ENCODE measurements at regions of chr1 and their contacts with region 1.

Region 1: DNA sequence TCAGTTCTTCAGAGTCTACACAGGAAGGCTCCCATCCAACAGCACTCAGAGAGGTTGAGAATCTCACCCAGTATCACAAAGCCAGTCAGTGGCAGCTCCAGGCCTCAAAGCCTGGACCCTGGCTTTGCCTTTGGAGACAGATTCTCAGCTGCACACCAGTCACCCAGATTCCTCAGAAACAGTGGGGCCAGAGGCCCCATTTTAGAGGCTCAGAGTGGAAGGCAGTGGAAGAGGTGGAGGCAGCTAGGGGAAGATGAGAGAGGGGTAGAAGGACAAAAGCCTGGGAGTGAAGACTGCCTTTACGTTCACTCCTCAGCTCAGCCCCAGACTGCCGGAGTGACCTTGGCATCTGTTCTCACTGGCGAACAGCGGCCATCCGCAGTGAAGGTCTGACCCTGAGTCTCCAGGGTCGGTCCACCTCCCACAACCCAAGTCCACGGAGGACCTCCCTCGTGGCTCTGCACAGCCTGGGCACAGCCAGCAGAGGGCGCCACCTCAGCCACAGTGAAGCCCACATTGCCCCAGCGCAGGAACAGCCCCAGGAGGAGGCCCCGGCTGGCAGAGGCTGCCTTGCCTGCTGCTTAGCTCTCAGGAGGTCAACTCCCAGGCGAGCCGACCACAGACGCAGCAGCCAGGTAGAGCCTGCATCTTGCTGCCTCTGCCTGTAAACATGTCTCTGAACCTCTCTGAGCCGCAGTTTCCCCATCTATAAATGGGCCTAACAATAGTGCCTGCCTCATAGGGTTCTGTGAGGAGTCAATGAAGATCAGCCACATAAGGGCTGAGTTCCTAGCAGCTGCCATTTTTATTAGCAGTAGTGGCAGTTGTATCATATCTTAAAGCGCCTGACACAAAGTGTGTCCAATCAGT is 5.9 kb upstream of the FNDC5 start:
- DNase-seq: peak; percentile 67
- ATAC-seq: peak; percentile 48
- H3K4me3 ChIP-seq: no peak overlapping the region
- H3K4me3 Mint-ChIP-seq: no peak overlapping the region
- H3K27ac ChIP-seq: no peak overlapping the region
- H3K27ac Mint-ChIP-seq: no peak overlapping the region
- H3K4me1 ChIP-seq: peaks cover 14 to 26% of the 10 kb centered on the region in 2 donors
- H3K4me1 Mint-ChIP-seq: peaks cover 23% of the 10 kb centered on the region
- H3K27me3 ChIP-seq: peaks cover 0 to 50% (median 12%) of the 10 kb centered on the region in 4 experiments
- H3K27me3 Mint-ChIP-seq: peaks cover 38% of the 10 kb centered on the region
- CTCF ChIP-seq: peak; percentile 82

Region 2: DNA sequence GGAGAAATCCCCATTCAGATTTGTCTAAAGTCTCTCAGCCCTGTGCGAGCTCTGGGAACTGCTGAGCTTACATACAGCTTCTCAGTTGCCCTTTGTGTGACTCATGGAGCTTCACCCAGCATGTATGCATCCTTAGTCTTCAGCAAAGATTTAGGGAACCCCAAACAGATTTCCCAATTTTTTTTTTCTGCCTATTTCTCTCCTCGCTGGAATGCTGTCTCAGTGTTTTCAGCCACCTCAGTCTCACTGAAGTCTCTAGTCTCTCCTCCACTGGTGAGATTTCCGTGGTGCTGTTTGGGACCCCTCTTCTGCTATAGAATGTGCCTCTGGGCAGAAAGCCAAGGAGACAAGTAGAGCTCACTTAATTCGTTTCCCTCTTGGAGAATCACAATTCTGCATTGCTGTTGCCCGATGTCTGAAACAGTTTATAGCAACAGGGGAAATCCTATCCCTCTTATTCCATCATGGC is 725.2 kb before region 1 on chr1:
- CTCF ChIA-PET with region 1: no interaction called
- POLR2A ChIA-PET with region 1: no interaction called
- intact Hi-C with region 1: no loop called
- DNase-seq: no peak
- ATAC-seq: no peak
- H3K4me3 ChIP-seq: no peak overlapping the region
- H3K4me3 Mint-ChIP-seq: no peak overlapping the region
- H3K27ac ChIP-seq: no peak overlapping the region
- H3K27ac Mint-ChIP-seq: no peak overlapping the region
- H3K4me1 ChIP-seq: no peaks in the 10 kb centered on the region
- H3K4me1 Mint-ChIP-seq: peaks cover 5% of the 10 kb centered on the region
- H3K27me3 ChIP-seq: no peaks in the 10 kb centered on the region
- H3K27me3 Mint-ChIP-seq: no peaks in the 10 kb centered on the region
- CTCF ChIP-seq: no peak

Region 3: DNA sequence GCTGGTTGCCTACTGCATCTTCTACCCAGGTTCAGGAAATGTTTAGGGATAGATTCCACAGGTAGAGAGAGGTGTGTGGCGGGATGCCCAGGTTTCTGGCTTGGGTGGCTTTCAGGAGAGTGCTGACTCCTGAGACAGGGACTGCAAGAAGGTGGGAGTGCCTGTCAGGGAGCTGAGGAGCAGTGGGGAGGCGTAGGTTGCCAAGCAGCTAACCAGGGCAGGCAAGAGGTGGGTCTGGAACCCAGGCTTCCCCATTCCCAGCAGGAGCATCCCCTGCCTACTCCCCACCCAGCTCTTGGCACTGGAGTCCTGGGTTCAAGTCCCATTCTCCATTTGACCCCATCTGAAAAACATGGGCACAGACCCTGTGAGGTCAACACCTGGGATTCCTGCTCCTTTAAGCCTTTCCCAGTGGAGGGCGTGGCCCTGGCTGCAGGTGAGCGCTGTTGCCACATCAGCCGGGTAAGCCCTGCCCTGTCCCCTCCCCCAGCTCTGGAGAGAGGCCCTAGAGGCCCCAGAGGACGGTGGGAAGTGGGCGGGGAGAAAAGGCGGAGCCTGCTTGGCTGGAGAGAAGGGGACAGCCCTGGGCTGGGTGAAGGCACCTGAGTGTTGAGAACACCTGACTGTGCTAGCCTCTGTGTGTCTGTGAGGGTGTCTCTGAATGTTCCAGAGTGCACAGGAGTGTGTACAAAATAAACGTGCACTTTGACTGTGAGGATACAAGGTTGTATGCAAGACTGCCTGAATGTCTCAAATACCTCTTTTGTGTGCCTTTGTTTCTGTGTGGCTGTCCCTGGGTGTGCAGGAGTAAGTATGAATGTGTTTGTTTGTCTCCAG is 160.0 kb before region 1 on chr1:
- CTCF ChIA-PET with region 1: interaction called, 42 read pairs
- POLR2A ChIA-PET with region 1: no interaction called
- intact Hi-C with region 1: loop called (anchors 1 kb)
- DNase-seq: peak; percentile 48
- ATAC-seq: peak; percentile 46
- H3K4me3 ChIP-seq: no peak overlapping the region
- H3K4me3 Mint-ChIP-seq: no peak overlapping the region
- H3K27ac ChIP-seq: no peak overlapping the region
- H3K27ac Mint-ChIP-seq: no peak overlapping the region
- H3K4me1 ChIP-seq: peaks cover 6 to 13% of the 10 kb centered on the region in 2 donors
- H3K4me1 Mint-ChIP-seq: peaks cover 7% of the 10 kb centered on the region
- H3K27me3 ChIP-seq: peaks cover 0 to 27% (median 3%) of the 10 kb centered on the region in 4 experiments
- H3K27me3 Mint-ChIP-seq: peaks cover 16% of the 10 kb centered on the region
- CTCF ChIP-seq: no peak

Region 4: DNA sequence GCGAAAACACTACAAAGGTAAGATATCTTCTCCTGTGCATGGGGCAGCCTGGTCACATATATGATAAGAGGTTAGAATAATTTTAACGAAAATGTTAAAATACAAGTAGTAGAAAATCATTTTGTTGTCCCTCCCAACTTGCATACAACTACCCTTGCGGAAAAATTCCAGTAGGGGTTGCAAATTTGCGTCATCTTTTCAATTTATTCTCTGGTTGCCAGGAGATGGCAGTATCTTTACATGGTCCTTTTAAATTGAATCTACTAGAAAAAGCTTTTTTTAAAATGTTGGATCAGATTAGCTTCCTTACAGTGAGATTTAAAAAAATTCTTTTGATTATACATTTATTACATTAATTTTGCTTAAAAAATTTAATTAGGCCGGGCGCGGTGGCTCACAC is 48.2 kb before region 1 on chr1:
- CTCF ChIA-PET with region 1: interaction called, 3 read pairs
- POLR2A ChIA-PET with region 1: no interaction called
- intact Hi-C with region 1: loop called (anchors 10 kb)
- DNase-seq: no peak
- ATAC-seq: no peak
- H3K4me3 ChIP-seq: no peak overlapping the region
- H3K4me3 Mint-ChIP-seq: no peak overlapping the region
- H3K27ac ChIP-seq: no peak overlapping the region
- H3K27ac Mint-ChIP-seq: no peak overlapping the region
- H3K4me1 ChIP-seq: no peaks in the 10 kb centered on the region
- H3K4me1 Mint-ChIP-seq: peaks cover 4% of the 10 kb centered on the region
- H3K27me3 ChIP-seq: no peaks in the 10 kb centered on the region
- H3K27me3 Mint-ChIP-seq: no peaks in the 10 kb centered on the region
- CTCF ChIP-seq: no peak

Region 5: GRCh38 chr1:32892368-32893197 is 16.0 kb after region 1 on chr1:
- CTCF ChIA-PET with region 1: interaction called, 14 read pairs
- POLR2A ChIA-PET with region 1: no interaction called
- intact Hi-C with region 1: no loop called
- DNase-seq: peak; percentile 71
- ATAC-seq: peak; percentile 72
- H3K4me3 ChIP-seq: peak overlapping the region in 3 of 5 experiments; percentile 42 to 57 (median 45)
- H3K4me3 Mint-ChIP-seq: peak overlapping the region; percentile 77
- H3K27ac ChIP-seq: no peak overlapping the region
- H3K27ac Mint-ChIP-seq: no peak overlapping the region
- H3K4me1 ChIP-seq: peaks cover 16 to 24% of the 10 kb centered on the region in 2 donors
- H3K4me1 Mint-ChIP-seq: peaks cover 16% of the 10 kb centered on the region
- H3K27me3 ChIP-seq: peaks cover 0 to 77% (median 36%) of the 10 kb centered on the region in 4 experiments
- H3K27me3 Mint-ChIP-seq: peaks cover 74% of the 10 kb centered on the region
- CTCF ChIP-seq: peak; percentile 78

Region 6: DNA sequence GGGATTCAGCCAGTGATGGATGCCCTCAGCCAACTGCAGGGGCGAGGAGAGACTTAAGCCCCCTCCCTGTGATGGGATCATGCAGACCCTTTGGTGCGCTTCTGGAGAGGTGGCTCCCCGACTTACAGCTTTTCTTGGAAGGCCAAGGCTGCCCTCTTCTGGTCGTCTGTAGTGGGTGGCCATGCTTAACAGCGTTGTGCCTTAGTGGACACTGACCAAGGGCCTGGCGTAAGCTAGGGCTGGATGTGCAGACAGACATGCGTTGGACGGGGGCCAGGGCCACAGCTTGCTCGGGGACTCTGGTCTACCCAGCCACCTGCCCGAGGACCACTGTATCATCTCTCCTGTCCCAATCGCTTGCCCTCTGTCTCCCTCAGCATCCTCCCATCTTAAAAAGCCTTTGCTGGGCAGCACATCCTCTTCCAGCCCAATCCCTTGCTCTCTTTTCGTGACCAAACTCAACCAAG is 209.8 kb after region 1 on chr1:
- CTCF ChIA-PET with region 1: interaction called, 44 read pairs
- POLR2A ChIA-PET with region 1: no interaction called
- intact Hi-C with region 1: no loop called
- DNase-seq: peak; percentile 68
- ATAC-seq: peak; percentile 53
- H3K4me3 ChIP-seq: no peak overlapping the region
- H3K4me3 Mint-ChIP-seq: no peak overlapping the region
- H3K27ac ChIP-seq: no peak overlapping the region
- H3K27ac Mint-ChIP-seq: no peak overlapping the region
- H3K4me1 ChIP-seq: peaks cover 19 to 24% of the 10 kb centered on the region in 2 donors
- H3K4me1 Mint-ChIP-seq: peaks cover 32% of the 10 kb centered on the region
- H3K27me3 ChIP-seq: peaks cover 0 to 5% (median 2%) of the 10 kb centered on the region in 4 experiments
- H3K27me3 Mint-ChIP-seq: peaks cover 10% of the 10 kb centered on the region
- CTCF ChIP-seq: peak; percentile 74

Measured in B cell (primary cell).